Pancreas (tissue), 10 donors: ENCODE measurements at regions of chr12 and their contacts with region 1.

Region 1: DNA sequence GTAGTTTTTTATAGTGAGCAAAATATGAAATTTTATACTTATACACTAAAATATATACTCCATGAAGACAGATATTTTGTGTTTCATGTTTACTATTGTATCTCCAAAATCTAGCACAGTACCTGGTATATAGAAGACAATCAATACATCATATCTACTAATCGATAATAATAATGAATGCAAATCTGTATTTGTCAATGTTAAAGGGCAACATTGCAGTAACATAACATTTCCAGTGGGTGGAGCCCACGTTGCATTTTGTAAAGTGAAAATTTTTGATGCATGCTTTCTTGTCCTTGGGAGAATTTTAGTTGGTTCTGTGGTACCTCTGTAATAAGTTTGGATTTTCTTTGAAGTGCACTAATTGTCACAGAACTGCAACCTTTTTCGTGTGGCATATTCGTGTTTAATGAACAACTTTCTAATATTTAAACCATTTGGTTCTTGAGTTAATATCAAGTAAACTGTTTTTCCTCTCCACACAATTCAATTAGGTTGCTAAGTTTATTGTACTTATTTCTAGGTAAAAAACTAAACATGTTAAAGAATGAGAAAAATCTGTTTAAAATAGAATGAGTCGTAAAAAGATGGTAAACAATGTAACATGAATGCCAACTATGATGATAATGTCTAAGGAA is 47.4 kb downstream of the AVPR1A start:
- DNase-seq: no peak
- ATAC-seq: peak in 3 of 4 donors; percentile 44 to 52 (median 47)
- H3K4me3 ChIP-seq: no peak overlapping the region
- H3K27ac ChIP-seq: no peak overlapping the region
- H3K4me1 ChIP-seq: no peaks in the 10 kb centered on the region
- H3K27me3 ChIP-seq: no peaks in the 10 kb centered on the region
- CTCF ChIP-seq: peak; percentile 39 to 73 (median 53)

Region 2: GRCh38 chr12:63220921-63221320 is 117.3 kb after region 1 on chr12:
- intact Hi-C with region 1: no loop called
- DNase-seq: no peak
- ATAC-seq: no peak
- H3K4me3 ChIP-seq: no peak overlapping the region
- H3K27ac ChIP-seq: no peak overlapping the region
- H3K4me1 ChIP-seq: no peaks in the 10 kb centered on the region
- H3K27me3 ChIP-seq: peaks cover 0 to 3% (median 0%) of the 10 kb centered on the region in 4 donors
- CTCF ChIP-seq: no peak

Region 3: DNA sequence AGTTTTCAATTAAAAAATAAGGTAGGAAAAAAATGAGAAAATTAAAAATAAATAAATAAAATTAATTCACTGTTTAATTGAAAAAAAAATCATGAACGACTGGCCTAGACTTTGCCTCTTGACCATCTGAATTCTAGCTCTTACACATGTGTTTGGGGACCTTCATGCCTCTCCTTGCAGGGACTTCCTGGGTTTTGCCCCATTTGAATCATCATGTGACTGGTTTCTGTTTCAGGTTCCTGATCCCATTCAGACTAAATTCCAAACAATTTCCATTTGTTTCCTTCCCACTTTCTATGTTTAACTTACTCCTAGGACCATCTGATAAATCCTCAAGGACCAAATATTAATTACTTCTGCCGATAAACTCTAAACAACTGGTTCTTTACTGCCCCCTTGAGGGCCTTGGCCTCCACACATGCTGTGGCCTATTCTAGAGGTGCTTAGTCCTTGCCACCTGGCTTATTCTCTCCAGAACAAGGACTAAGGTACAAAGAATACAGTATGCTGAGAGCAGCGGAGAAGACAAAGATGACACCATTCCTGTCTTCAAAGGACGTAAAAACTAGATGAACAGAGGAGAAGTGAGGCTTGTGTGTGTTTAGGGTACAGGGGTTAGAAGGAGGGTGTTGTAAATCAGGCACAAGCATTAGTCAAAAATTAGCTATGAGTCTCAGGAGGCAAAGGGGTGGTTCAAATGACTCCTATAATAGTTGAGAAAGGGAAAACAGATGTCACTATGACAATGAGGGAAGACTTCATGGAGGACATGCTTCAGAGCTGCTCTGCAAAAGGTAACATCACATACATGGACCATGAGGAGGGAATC is 173.1 kb after region 1 on chr12:
- intact Hi-C with region 1: loop called in 1 of 3 experiments (anchors 10 kb)
- DNase-seq: peak in 5 of 6 donors; percentile 26 to 63 (median 50)
- ATAC-seq: peak; percentile 74 to 93 (median 88)
- H3K4me3 ChIP-seq: no peak overlapping the region
- H3K27ac ChIP-seq: no peak overlapping the region
- H3K4me1 ChIP-seq: no peaks in the 10 kb centered on the region
- H3K27me3 ChIP-seq: peaks cover 0 to 4% (median 0%) of the 10 kb centered on the region in 4 donors
- CTCF ChIP-seq: peak; percentile 42 to 63 (median 56)